ENCODE measurements at regions of chr2 and their contacts with region 1.

Region 1: DNA sequence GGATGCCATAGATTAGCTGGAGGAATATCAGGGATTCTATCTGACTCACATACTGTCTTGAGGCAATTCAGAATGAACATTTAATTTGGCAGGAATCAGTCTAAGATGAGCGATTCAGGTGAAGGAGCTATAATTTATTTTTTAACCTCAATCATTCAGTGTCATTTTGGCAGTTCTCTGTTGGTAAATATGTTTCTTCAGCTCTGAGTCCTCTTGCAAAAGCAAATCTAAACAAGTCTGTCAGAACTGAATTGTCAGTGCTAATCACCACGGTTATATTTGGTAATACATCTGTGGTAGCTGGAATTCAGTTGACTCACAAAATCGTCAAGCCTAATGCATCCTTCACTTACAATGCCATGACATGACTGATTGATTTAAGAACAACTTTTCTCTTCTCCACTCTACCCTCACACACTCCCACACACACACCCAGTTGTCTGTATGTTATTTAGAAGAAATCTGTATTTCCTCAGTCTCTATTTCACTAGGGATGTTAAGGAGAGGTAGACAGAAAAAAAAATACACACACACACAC is 516.6 kb upstream of the NXPH2 start:
- DNase-seq: no peak
- H3K4me3 ChIP-seq: no peak overlapping the region
- H3K27ac ChIP-seq: no peak overlapping the region
- H3K4me1 ChIP-seq: no peaks in the 10 kb centered on the region
- H3K27me3 ChIP-seq: no peaks in the 10 kb centered on the region
- CTCF ChIP-seq: no peak
- EP300 ChIP-seq: no peak
- POLR2A ChIP-seq: no peak

Region 2: GRCh38 chr2:138107292-138107691 is 1189.4 kb before region 1 on chr2:
- in situ Hi-C with region 1: no loop called
- intact Hi-C with region 1: no loop called
- DNase-seq: no peak
- H3K4me3 ChIP-seq: no peak overlapping the region
- H3K27ac ChIP-seq: no peak overlapping the region
- H3K4me1 ChIP-seq: no peaks in the 10 kb centered on the region
- H3K27me3 ChIP-seq: no peaks in the 10 kb centered on the region
- CTCF ChIP-seq: no peak
- EP300 ChIP-seq: no peak
- POLR2A ChIP-seq: no peak

Region 3: DNA sequence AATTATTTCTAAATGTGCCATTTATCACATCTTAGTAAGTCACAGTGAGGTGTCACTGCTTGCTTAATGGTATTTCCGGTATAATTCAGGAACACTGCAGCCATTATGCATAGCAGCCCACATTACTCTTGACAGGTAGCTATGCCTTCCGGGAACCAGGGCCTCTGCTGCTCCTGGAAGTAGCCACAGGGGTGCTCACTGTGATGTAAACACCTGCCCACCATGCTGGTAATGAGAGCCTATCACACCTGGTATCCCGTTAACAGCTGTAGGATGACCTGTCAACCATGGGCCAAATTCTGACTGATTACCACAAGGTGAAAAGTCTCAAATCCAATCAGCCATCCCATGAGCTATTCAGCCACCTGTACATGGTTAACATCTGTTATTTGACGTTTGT is 130.4 kb after region 1 on chr2:
- in situ Hi-C with region 1: no loop called
- intact Hi-C with region 1: no loop called
- DNase-seq: no peak
- H3K4me3 ChIP-seq: no peak overlapping the region
- H3K27ac ChIP-seq: no peak overlapping the region
- H3K4me1 ChIP-seq: no peaks in the 10 kb centered on the region
- H3K27me3 ChIP-seq: no peaks in the 10 kb centered on the region
- CTCF ChIP-seq: no peak
- EP300 ChIP-seq: no peak
- POLR2A ChIP-seq: no peak

Region 4: DNA sequence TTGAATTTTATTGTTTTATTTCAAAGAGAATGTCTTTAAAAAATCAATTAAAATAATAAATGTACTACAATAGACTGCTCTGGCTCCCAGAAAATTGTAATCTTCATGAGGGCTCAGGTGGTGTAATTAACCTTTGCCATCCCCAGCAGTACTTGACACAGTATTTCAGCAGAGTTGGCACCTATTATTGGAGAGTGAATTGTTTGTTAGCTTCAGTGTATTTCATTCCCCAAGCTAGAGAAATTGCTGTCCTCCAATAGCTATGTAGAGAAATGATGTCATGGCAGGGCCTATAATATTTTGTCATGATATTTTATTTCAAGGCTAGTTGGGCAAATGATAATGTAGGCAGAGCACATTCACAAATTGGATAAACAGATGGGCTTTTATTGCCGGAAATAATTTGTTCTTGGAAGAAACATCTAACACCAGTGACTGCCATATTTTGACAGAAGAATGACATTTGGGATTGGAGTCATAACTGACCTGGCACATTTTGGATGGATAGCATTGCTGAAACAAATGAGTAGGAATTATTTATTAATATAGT is 195.5 kb after region 1 on chr2:
- in situ Hi-C with region 1: no loop called
- intact Hi-C with region 1: no loop called
- DNase-seq: no peak
- H3K4me3 ChIP-seq: no peak overlapping the region
- H3K27ac ChIP-seq: no peak overlapping the region
- H3K4me1 ChIP-seq: no peaks in the 10 kb centered on the region
- H3K27me3 ChIP-seq: no peaks in the 10 kb centered on the region
- CTCF ChIP-seq: no peak
- EP300 ChIP-seq: no peak
- POLR2A ChIP-seq: no peak

Region 5: GRCh38 chr2:140462990-140463389 is 1166.2 kb after region 1 on chr2:
- in situ Hi-C with region 1: no loop called
- intact Hi-C with region 1: loop called (anchors 5 kb)
- DNase-seq: no peak
- H3K4me3 ChIP-seq: no peak overlapping the region
- H3K27ac ChIP-seq: no peak overlapping the region
- H3K4me1 ChIP-seq: no peaks in the 10 kb centered on the region
- H3K27me3 ChIP-seq: no peaks in the 10 kb centered on the region
- CTCF ChIP-seq: no peak
- EP300 ChIP-seq: no peak
- POLR2A ChIP-seq: no peak